ENCODE measurements at regions of chr9 and their contacts with region 1.

Region 1: DNA sequence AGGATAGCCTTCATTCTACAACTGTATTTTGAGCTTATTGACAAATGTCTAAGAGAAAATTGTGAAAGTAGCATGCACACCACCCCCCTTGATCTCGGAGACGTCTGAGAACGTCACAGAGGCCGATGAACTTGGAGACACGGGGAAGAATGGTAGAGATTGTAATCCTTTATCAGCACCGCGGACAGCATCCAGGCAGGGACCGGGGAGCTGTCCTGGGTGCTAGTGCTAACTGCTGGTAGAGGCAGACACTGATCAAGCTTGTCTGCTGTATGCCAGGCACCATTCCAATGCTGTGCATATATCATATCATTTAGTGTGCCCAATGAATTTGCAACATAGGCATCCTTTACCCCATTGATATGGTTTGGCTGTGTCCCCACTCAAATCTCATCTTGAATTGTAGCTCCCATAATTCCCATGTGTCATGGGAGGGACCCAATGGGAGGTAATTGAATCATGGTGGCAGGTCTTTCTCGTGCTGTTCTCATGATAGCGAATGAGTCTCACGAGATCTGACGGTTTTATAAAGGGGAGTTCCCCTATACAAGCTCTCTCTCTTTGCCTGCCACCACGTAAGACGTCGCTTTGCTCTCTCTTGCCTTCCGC is 98.8 kb downstream of the LHX2 start:
- DNase-seq: peak; percentile 68

Region 2: GRCh38 chr9:123851851-123852250 is 258.6 kb before region 1 on chr9:
- in situ Hi-C with region 1: no loop called
- DNase-seq: no peak

Region 3: GRCh38 chr9:124392871-124393460 is 282.6 kb after region 1 on chr9:
- in situ Hi-C with region 1: loop called (anchors 25 kb)
- DNase-seq: peak; percentile 74

Measured in ACHN (cell line).